ENCODE measurements at regions of chr9 and their contacts with region 1.

Region 1: GRCh38 chr9:94139672-94140417 is 55.6 kb downstream of the PTPDC1 start:
- DNase-seq: peak; percentile 96
- H3K4me3 ChIP-seq: no peak overlapping the region
- H3K27ac ChIP-seq: peak overlapping the region; percentile 87
- H3K4me1 ChIP-seq: peaks cover 24% of the 10 kb centered on the region
- H3K27me3 ChIP-seq: no peaks in the 10 kb centered on the region
- CTCF ChIP-seq: no peak
- POLR2A ChIP-seq: no peak

Region 2: DNA sequence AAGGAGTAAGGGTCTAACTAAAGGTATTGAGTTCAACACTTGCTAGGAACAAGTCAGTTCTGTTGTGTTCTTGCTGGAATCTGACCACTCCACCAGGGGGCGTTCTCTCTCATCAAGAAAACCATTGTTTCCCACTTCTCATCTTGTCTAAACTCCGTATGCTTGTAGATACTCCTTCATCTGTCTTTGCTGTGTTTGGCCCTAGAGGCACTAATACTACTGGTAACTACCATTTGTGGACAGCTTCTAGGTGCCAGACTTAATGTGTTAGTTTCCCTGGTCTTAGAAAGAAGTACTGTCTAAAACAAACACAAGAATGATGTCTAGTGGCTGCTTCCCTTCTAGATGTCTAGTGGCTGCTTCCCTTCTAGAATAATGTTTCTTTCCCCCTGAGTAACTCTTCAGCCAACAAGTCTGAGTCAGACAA is 74.3 kb before region 1 on chr9:
- CTCF ChIA-PET with region 1: interaction called, 7 read pairs
- POLR2A ChIA-PET with region 1: no interaction called
- dilution Hi-C with region 1: no loop called
- intact Hi-C with region 1: loop called (anchors 5 kb)
- DNase-seq: peak; percentile 89
- H3K4me3 ChIP-seq: no peak overlapping the region
- H3K27ac ChIP-seq: no peak overlapping the region
- H3K4me1 ChIP-seq: peaks cover 4% of the 10 kb centered on the region
- H3K27me3 ChIP-seq: no peaks in the 10 kb centered on the region
- CTCF ChIP-seq: peak; percentile 73 to 80
- POLR2A ChIP-seq: no peak

Region 3: GRCh38 chr9:94084314-94084713 is 55.5 kb before region 1 on chr9 and contains the start of gene PTPDC1:
- CTCF ChIA-PET with region 1: interaction called, 3 read pairs
- POLR2A ChIA-PET with region 1: no interaction called
- dilution Hi-C with region 1: no loop called
- intact Hi-C with region 1: loop called (anchors 5 kb)
- DNase-seq: peak; percentile 8
- H3K4me3 ChIP-seq: no peak within 1 kb of the TSS
- H3K27ac ChIP-seq: no peak within 1 kb of the TSS
- H3K4me1 ChIP-seq: peaks cover 9% of the 10 kb centered on the region
- H3K27me3 ChIP-seq: no peaks in the 10 kb centered on the region
- CTCF ChIP-seq: no peak
- POLR2A ChIP-seq: no peak
- total RNA-seq, gene PTPDC1: 9.1 TPM in 2 replicates

Region 4: GRCh38 chr9:94112716-94113465 is 27.0 kb before region 1 on chr9:
- CTCF ChIA-PET with region 1: no interaction called
- POLR2A ChIA-PET with region 1: no interaction called
- dilution Hi-C with region 1: no loop called
- intact Hi-C with region 1: no loop called
- DNase-seq: no peak
- H3K4me3 ChIP-seq: no peak overlapping the region
- H3K27ac ChIP-seq: no peak overlapping the region
- H3K4me1 ChIP-seq: peaks cover 2% of the 10 kb centered on the region
- H3K27me3 ChIP-seq: no peaks in the 10 kb centered on the region
- CTCF ChIP-seq: no peak
- POLR2A ChIP-seq: no peak

Region 5: GRCh38 chr9:94157050-94157764 is 17.4 kb after region 1 on chr9:
- CTCF ChIA-PET with region 1: interaction called, 9 read pairs
- POLR2A ChIA-PET with region 1: interaction called, 13 read pairs
- dilution Hi-C with region 1: no loop called
- intact Hi-C with region 1: loop called (anchors 1 kb)
- DNase-seq: peak; percentile 83
- H3K4me3 ChIP-seq: no peak overlapping the region
- H3K27ac ChIP-seq: peak overlapping the region; percentile 27
- H3K4me1 ChIP-seq: peaks cover 10% of the 10 kb centered on the region
- H3K27me3 ChIP-seq: no peaks in the 10 kb centered on the region
- CTCF ChIP-seq: no peak
- POLR2A ChIP-seq: peak; percentile 45

Measured in endothelial cell of umbilical vein (primary cell).